Activated naive CD4-positive, alpha-beta T cell treated with anti-CD3 and anti-CD28 coated beads for 36 hours (primary cell): ENCODE measurements at regions of chr11 and their contacts with region 1.

Region 1: GRCh38 chr11:16785520-16786128 is 47.2 kb downstream of the C11orf58 start:
- DNase-seq: peak; percentile 79
- H3K4me3 Mint-ChIP-seq: no peak overlapping the region
- H3K27ac Mint-ChIP-seq: no peak overlapping the region
- H3K4me1 Mint-ChIP-seq: no peaks in the 10 kb centered on the region
- H3K27me3 Mint-ChIP-seq: no peaks in the 10 kb centered on the region

Region 2: GRCh38 chr11:16690086-16690485 is 95.5 kb before region 1 on chr11:
- CTCF ChIA-PET with region 1: no interaction called
- intact Hi-C with region 1: no loop called
- DNase-seq: no peak
- H3K4me3 Mint-ChIP-seq: no peak overlapping the region
- H3K27ac Mint-ChIP-seq: no peak overlapping the region
- H3K4me1 Mint-ChIP-seq: no peaks in the 10 kb centered on the region
- H3K27me3 Mint-ChIP-seq: peaks cover 3% of the 10 kb centered on the region

Region 3: GRCh38 chr11:16722581-16723344 is 62.9 kb before region 1 on chr11:
- CTCF ChIA-PET with region 1: no interaction called
- intact Hi-C with region 1: no loop called
- DNase-seq: no peak
- H3K4me3 Mint-ChIP-seq: no peak overlapping the region
- H3K27ac Mint-ChIP-seq: no peak overlapping the region
- H3K4me1 Mint-ChIP-seq: no peaks in the 10 kb centered on the region
- H3K27me3 Mint-ChIP-seq: no peaks in the 10 kb centered on the region

Region 4: GRCh38 chr11:16801288-16801980 is 15.8 kb after region 1 on chr11:
- CTCF ChIA-PET with region 1: interaction called, 12 read pairs
- intact Hi-C with region 1: no loop called
- DNase-seq: no peak
- H3K4me3 Mint-ChIP-seq: no peak overlapping the region
- H3K27ac Mint-ChIP-seq: no peak overlapping the region
- H3K4me1 Mint-ChIP-seq: peaks cover 8% of the 10 kb centered on the region
- H3K27me3 Mint-ChIP-seq: no peaks in the 10 kb centered on the region

Region 5: DNA sequence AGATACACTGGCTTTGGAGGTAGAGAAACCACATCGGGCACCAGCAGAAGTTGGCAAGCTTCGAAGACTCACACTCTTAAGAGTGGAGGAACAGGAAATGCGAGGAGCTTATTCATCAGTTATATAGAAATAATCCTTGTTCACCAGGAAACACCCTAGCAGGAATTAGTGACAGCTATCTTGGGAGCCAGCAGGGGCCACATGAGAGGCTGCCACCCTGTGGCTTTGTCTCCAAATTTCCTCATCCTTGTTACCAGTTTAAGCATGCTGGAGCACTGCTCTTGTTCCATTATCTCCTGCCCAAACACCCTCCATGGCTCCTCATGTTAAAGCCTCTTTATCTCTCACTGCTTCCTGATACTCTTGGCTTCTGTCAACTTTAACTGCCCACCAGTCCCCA is 97.5 kb after region 1 on chr11:
- CTCF ChIA-PET with region 1: interaction called, 3 read pairs
- intact Hi-C with region 1: loop called (anchors 1 kb)
- DNase-seq: no peak
- H3K4me3 Mint-ChIP-seq: no peak overlapping the region
- H3K27ac Mint-ChIP-seq: no peak overlapping the region
- H3K4me1 Mint-ChIP-seq: no peaks in the 10 kb centered on the region
- H3K27me3 Mint-ChIP-seq: no peaks in the 10 kb centered on the region

Region 6: DNA sequence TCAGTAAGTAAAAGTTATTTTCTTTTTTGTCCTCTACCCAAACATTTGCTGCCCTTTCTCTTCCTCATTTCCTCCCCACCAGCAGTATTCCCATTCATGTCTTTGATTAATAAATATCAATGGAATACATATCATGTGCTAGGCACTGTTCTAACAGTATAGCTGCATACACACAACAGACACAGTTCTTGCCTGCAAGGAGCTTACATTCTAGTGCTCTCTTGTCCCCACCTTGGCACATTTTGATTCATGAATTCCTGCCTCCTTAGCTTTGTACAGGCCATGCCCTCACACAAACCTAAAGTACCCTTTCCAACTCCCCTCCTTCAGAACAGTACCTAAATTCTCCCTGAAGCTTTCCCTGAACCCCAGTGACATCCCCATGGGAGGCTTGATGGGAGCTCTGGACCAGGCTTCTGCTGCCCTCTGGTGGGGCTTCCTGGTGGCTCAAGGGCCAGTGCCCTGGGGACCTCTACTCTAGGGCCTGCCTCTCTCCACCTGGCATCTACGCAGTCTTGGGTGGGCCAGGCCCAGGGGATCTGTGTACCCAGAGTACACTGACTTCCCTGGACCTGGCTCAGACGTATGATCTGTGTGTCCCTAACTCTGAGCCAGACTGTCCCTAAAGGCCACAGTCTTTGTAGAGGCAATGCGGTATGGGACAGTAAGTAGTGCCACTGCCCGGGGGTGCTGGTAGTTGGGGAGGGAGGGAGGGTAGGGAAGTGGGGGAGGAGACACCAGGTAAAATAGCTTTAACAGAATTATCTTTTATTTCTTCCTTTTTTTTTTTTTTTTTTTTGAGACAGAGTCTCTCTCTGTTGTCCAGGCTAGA is 277.8 kb after region 1 on chr11:
- CTCF ChIA-PET with region 1: interaction called, 32 read pairs
- intact Hi-C with region 1: loop called (anchors 1 kb)
- DNase-seq: peak; percentile 74
- H3K4me3 Mint-ChIP-seq: no peak overlapping the region
- H3K27ac Mint-ChIP-seq: no peak overlapping the region
- H3K4me1 Mint-ChIP-seq: no peaks in the 10 kb centered on the region
- H3K27me3 Mint-ChIP-seq: no peaks in the 10 kb centered on the region